ENCODE measurements at regions of chr14 and their contacts with region 1.

Region 1: GRCh38 chr14:60064491-60065072 is 27.1 kb upstream of the PCNX4 start:
- DNase-seq: no peak
- H3K4me3 ChIP-seq: no peak overlapping the region
- H3K27ac ChIP-seq: no peak overlapping the region
- H3K4me1 ChIP-seq: peaks cover 3% of the 10 kb centered on the region
- H3K27me3 ChIP-seq: no peaks in the 10 kb centered on the region
- CTCF ChIP-seq: peak; percentile 31 to 58 (median 49)
- POLR2A ChIP-seq: no peak

Region 2: DNA sequence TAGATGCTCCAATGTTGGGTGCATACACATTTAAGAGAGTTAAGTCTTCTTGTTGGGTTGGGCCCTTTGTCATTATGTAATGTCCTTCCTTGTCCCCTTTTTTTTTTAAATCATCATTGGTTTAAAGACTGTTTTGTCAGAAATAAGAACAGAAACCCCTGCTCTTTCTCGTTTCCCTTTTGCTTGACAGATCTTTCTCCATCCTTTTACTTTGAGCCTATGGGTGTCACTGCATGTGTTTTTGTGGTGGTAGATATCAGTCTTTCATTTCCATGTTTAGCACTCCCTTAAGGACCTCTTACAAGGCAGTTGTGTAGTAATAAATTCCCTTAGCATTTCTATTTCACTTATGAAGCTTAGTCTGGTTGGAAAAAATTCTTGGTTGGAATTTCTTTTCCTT is 241.4 kb before region 1 on chr14:
- intact Hi-C with region 1: no loop called
- DNase-seq: no peak
- H3K4me3 ChIP-seq: no peak overlapping the region
- H3K27ac ChIP-seq: no peak overlapping the region
- H3K4me1 ChIP-seq: no peaks in the 10 kb centered on the region
- H3K27me3 ChIP-seq: no peaks in the 10 kb centered on the region
- CTCF ChIP-seq: no peak
- POLR2A ChIP-seq: no peak

Region 3: GRCh38 chr14:60184146-60184904 is 119.7 kb after region 1 on chr14:
- intact Hi-C with region 1: loop called (anchors 10 kb)
- DNase-seq: no peak
- H3K4me3 ChIP-seq: peak overlapping the region; percentile 40 to 45
- H3K27ac ChIP-seq: peak overlapping the region; percentile 49
- H3K4me1 ChIP-seq: no peaks in the 10 kb centered on the region
- H3K27me3 ChIP-seq: no peaks in the 10 kb centered on the region
- CTCF ChIP-seq: peak; percentile 70 to 87 (median 76)
- POLR2A ChIP-seq: no peak